ENCODE measurements at regions of chr21 and their contacts with region 1.

Region 1: DNA sequence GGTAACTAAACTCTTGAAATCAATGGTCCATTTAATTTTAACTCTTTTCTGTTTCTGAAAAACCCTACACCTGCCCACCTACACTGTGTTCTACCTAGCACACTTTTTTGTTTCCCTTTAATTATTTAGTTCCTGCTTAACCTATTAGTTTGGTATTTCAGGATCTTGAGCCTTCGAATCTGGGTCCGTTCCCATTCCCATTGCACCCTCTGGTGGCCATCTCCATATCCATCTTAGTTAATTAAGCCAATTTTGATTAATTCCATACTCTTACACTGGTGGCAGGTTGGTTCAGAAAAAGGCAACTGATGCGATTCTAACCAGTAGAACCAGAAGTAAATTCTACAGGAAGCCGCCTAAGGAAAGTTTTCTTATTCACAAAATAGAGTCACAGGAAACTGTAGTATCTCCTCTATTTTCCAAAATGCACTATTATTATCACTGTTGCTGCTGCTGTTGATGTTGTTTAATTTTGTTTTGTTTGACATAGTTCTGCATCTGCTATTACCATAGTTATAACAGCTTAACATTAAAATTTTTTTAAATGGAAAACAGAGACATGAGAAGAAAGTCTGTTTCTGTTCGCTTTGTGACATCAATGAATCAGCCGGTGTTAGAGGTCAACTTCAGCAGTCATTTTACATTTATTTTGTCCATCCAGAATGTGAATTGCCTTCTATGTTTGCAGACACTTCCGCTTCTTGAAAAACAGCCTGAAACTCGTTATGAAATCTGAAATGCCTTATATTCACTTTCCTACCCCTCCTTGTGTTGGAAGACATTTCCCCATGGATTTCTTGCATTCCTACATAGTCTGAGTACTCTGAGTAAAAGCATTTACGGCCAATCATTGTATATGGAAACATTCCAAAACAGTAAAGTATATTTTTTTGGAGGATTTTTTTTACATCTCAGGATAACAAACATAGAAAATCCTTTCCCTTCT is 115.5 kb upstream of the NCAM2 start:
- DNase-seq: peak; percentile 29 to 45
- H3K4me3 ChIP-seq: no peak overlapping the region
- H3K4me3 Mint-ChIP-seq: no peak overlapping the region
- H3K27ac Mint-ChIP-seq: no peak overlapping the region
- H3K4me1 ChIP-seq: no peaks in the 10 kb centered on the region
- H3K4me1 Mint-ChIP-seq: peaks cover 6% of the 10 kb centered on the region
- H3K27me3 ChIP-seq: no peaks in the 10 kb centered on the region
- H3K27me3 Mint-ChIP-seq: no peaks in the 10 kb centered on the region
- CTCF ChIP-seq: peak; percentile 48 to 63

Region 2: DNA sequence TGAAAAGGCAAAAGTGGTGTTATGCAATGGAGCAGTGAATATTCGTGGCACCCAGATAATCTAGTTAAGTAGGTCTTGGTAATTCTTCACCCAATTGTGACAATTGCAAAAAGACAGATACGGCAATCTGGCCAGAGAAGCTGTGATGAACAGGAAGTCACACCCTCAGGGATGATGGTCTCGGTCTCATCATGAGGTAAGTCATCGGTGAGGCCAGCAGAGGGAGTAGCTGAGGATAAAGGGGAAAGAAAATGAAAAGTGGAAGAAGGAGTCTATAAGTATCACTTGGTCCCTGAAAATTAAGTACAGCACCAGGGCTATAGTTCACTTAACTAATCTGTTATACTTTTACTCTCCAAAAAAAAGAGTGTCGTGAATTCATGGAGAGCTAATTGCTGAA is 143.3 kb before region 1 on chr21:
- CTCF ChIA-PET with region 1: no interaction called
- POLR2A ChIA-PET with region 1: no interaction called
- intact Hi-C with region 1: loop called (anchors 1 kb)
- DNase-seq: peak in 1 of 2 experiments; percentile 13
- H3K4me3 ChIP-seq: no peak overlapping the region
- H3K4me3 Mint-ChIP-seq: no peak overlapping the region
- H3K27ac Mint-ChIP-seq: no peak overlapping the region
- H3K4me1 ChIP-seq: no peaks in the 10 kb centered on the region
- H3K4me1 Mint-ChIP-seq: no peaks in the 10 kb centered on the region
- H3K27me3 ChIP-seq: no peaks in the 10 kb centered on the region
- H3K27me3 Mint-ChIP-seq: no peaks in the 10 kb centered on the region
- CTCF ChIP-seq: peak; percentile 21 to 29

Region 3: DNA sequence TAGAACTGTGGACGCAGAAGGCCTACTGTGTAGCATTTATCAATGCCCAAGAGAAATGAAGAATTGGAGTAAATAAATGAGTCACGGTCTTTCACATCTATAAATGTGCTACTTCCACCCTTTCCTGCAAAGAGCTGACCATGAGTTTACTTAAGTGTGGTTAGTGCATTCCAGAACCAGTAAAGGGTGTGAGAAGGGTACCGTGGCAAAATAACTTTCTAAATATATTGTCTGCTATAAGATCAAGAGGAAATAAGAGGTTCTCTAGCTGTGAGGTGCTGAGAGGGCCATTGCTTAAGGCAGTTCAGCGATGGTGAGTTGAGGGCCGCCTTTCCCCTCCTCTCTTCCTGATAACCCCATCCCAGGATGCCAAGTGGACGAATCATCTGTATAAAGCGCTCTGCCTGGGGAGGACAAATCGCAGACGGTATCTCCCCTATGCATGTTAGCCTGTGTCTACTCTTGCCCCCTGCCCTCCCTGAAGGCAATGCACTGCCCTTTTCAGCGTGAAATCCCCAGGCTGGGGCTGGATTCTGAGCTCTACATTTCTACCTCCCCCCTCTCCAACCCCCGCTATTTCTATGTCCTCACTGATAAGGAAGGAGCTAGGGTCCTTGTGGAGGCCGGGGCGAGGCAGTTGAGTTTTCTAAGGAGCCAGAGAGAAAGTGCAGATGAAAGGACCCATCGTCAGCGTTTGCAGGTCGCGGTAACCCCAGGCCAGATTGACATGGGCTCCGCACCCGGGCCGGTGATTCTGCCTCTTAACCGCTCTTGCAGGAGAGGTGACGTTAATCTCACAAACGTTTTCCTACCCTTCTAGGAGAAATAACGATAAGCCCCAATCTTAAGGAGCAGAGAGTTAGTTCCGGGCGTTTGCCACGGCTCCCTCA is 113.9 kb after region 1 on chr21:
- CTCF ChIA-PET with region 1: no interaction called
- POLR2A ChIA-PET with region 1: no interaction called
- intact Hi-C with region 1: no loop called
- DNase-seq: no peak
- H3K4me3 ChIP-seq: no peak overlapping the region
- H3K4me3 Mint-ChIP-seq: no peak overlapping the region
- H3K27ac Mint-ChIP-seq: no peak overlapping the region
- H3K4me1 ChIP-seq: no peaks in the 10 kb centered on the region
- H3K4me1 Mint-ChIP-seq: no peaks in the 10 kb centered on the region
- H3K27me3 ChIP-seq: no peaks in the 10 kb centered on the region
- H3K27me3 Mint-ChIP-seq: peaks cover 11% of the 10 kb centered on the region
- CTCF ChIP-seq: no peak

Region 4: DNA sequence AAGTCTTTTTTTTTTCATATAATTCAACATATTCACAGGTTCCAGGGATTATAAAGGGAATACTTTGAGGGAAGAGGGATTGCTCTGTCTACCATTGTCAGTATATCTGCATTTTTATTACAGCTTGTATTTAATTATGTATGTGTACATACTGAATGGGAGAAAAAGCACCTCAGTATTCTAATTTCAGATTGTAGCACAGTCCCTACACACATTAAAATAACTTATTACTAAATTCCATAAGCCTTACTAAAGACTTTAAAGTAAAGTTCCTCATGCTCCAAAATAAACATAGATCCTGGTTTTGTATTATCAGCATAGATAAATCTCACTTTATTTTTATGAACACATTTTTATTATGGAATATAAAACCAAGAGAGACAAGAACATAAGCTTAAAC is 249.7 kb after region 1 on chr21:
- CTCF ChIA-PET with region 1: no interaction called
- POLR2A ChIA-PET with region 1: no interaction called
- intact Hi-C with region 1: no loop called
- DNase-seq: no peak
- H3K4me3 ChIP-seq: no peak overlapping the region
- H3K4me3 Mint-ChIP-seq: no peak overlapping the region
- H3K27ac Mint-ChIP-seq: no peak overlapping the region
- H3K4me1 ChIP-seq: no peaks in the 10 kb centered on the region; the same call in 1 of the 2 replicates
- H3K4me1 Mint-ChIP-seq: no peaks in the 10 kb centered on the region
- H3K27me3 ChIP-seq: no peaks in the 10 kb centered on the region
- H3K27me3 Mint-ChIP-seq: no peaks in the 10 kb centered on the region
- CTCF ChIP-seq: no peak

Region 5: DNA sequence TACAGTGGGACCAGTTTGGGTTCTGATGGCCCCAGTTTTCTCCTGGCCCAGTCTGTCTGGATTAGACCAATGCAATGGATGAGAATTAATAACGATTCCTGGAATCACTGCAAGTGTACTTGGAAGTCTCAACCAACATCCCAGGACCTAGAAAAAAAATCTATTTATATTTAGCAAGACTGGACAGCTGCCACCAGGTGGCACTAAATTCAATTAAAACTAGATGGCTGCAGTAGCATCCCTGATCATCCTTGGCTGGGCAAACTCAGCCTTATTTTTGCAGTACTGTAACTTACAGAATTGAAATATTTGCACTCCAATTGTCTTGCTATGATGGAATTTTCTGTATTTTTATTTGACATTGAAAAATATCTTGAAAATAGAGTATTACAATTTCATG is 281.2 kb after region 1 on chr21:
- CTCF ChIA-PET with region 1: no interaction called
- POLR2A ChIA-PET with region 1: no interaction called
- intact Hi-C with region 1: no loop called
- DNase-seq: peak; percentile 38 to 48
- H3K4me3 ChIP-seq: no peak overlapping the region
- H3K4me3 Mint-ChIP-seq: no peak overlapping the region
- H3K27ac Mint-ChIP-seq: no peak overlapping the region
- H3K4me1 ChIP-seq: no peaks in the 10 kb centered on the region
- H3K4me1 Mint-ChIP-seq: no peaks in the 10 kb centered on the region
- H3K27me3 ChIP-seq: no peaks in the 10 kb centered on the region
- H3K27me3 Mint-ChIP-seq: no peaks in the 10 kb centered on the region
- CTCF ChIP-seq: peak; percentile 52 to 56